ENCODE measurements at regions of chr1 and their contacts with region 1.

Region 1: GRCh38 chr1:154272217-154272998 is at the start of gene HAX1:
- DNase-seq: peak; percentile 89
- ATAC-seq: peak; percentile 90
- H3K4me3 Mint-ChIP-seq: peak within 1 kb of the TSS; percentile 94
- H3K27ac Mint-ChIP-seq: peak within 1 kb of the TSS; percentile 94
- H3K4me1 Mint-ChIP-seq: peaks cover 14% of the 10 kb centered on the region
- H3K27me3 Mint-ChIP-seq: no peaks in the 10 kb centered on the region
- CTCF ChIP-seq: peak; percentile 41; the same call in 1 of the 2 replicates
- total RNA-seq, gene HAX1: 63.4 to 69.2 TPM (median 65.8 TPM) in 3 replicates

Region 2: GRCh38 chr1:154115180-154115579 is 157.2 kb before region 1 on chr1:
- CTCF ChIA-PET with region 1: no interaction called
- POLR2A ChIA-PET with region 1: no interaction called
- DNase-seq: no peak
- ATAC-seq: no peak
- H3K4me3 Mint-ChIP-seq: no peak overlapping the region
- H3K27ac Mint-ChIP-seq: no peak overlapping the region
- H3K4me1 Mint-ChIP-seq: no peaks in the 10 kb centered on the region
- H3K27me3 Mint-ChIP-seq: no peaks in the 10 kb centered on the region; the same call in 1 of the 2 replicates
- CTCF ChIP-seq: no peak

Region 3: GRCh38 chr1:154129391-154129970 is 142.9 kb before region 1 on chr1:
- CTCF ChIA-PET with region 1: no interaction called
- POLR2A ChIA-PET with region 1: no interaction called
- DNase-seq: no peak
- ATAC-seq: no peak
- H3K4me3 Mint-ChIP-seq: no peak overlapping the region
- H3K27ac Mint-ChIP-seq: no peak overlapping the region
- H3K4me1 Mint-ChIP-seq: no peaks in the 10 kb centered on the region
- H3K27me3 Mint-ChIP-seq: no peaks in the 10 kb centered on the region
- CTCF ChIP-seq: no peak

Region 4: GRCh38 chr1:154198756-154199562 is 73.4 kb before region 1 on chr1:
- CTCF ChIA-PET with region 1: interaction called, 11 read pairs
- POLR2A ChIA-PET with region 1: no interaction called
- DNase-seq: peak; percentile 23
- ATAC-seq: peak; percentile 88
- H3K4me3 Mint-ChIP-seq: no peak overlapping the region
- H3K27ac Mint-ChIP-seq: no peak overlapping the region
- H3K4me1 Mint-ChIP-seq: peaks cover 2% of the 10 kb centered on the region; the same call in 1 of the 2 replicates
- H3K27me3 Mint-ChIP-seq: peaks cover 3% of the 10 kb centered on the region; the same call in 1 of the 2 replicates
- CTCF ChIP-seq: 0 out of 2 replicates have a peak, but pooled peaks have one; percentile 26

Region 5: DNA sequence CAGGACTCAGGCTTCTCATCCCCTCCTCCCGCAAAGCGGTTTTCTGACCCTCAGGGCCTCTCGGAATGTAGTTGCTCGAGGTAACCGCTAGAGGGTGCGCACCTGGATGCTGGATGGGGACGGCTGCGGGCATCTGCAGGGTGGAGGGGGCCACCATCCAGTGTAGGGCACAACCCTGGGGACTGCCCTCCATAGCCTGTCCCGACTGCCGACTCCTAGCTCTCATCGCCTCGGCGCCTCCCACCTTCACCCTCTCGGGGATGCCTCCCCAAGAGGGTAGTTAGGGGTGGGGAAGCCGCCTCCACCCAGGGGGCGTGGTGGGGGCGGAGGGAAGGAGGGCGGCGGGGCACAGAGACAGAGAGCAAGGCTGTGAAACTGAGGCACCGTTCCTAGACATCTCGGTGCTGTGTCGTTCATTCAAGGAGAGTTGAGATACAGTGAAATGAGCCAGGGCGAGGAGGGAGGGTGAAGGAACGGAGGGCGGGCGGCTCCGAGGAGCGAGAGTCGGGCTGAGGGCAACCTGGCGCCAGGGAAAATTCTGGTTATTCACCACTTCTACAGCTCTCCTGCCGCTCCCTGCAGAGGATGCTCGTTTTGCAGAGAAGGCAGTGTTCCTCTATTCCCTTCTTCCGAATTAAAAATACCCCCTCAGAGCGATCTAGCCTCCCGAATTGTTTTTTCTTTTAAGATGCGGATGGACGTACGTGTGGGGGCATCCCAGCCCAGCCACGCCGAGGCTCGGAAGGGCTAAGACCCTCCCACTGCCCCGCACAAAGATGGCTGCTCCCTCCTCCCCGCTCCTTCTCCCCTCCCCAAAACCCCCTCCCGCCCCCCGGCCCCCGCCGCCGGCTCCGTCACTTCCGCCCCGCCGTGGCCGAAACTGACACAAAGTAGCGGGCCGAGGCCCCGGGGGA is 52.5 kb after region 1 on chr1 and contains the start of gene ATP8B2:
- CTCF ChIA-PET with region 1: interaction called, 20 read pairs
- POLR2A ChIA-PET with region 1: no interaction called
- DNase-seq: peak; percentile 90
- ATAC-seq: peak; percentile 62
- H3K4me3 Mint-ChIP-seq: peak within 1 kb of the TSS; percentile 95
- H3K27ac Mint-ChIP-seq: peak within 1 kb of the TSS; percentile 92
- H3K4me1 Mint-ChIP-seq: peaks cover 31% of the 10 kb centered on the region
- H3K27me3 Mint-ChIP-seq: peaks cover 4% of the 10 kb centered on the region
- CTCF ChIP-seq: peak; percentile 98
- total RNA-seq, gene ATP8B2: 38.8 to 50.0 TPM (median 40.8 TPM) in 3 replicates